Ascending aorta (tissue), 2 donors: ENCODE measurements at regions of chr3 and their contacts with region 1.

Region 1: GRCh38 chr3:124559881-124560574 is 170.2 kb upstream of the UMPS start:
- DNase-seq: peak in 1 of 2 donors; percentile 81
- H3K4me3 ChIP-seq: no peak overlapping the region
- H3K27ac ChIP-seq: peak overlapping the region in 1 of 2 donors; percentile 74
- H3K4me1 ChIP-seq: peaks cover 0 to 29% of the 10 kb centered on the region in 2 donors
- H3K27me3 ChIP-seq: no peaks in the 10 kb centered on the region
- CTCF ChIP-seq: peak; percentile 64 to 81 (median 81)

Region 2: GRCh38 chr3:124351430-124352148 is 208.4 kb before region 1 on chr3:
- intact Hi-C with region 1: loop called (anchors 10 kb)
- DNase-seq: no peak
- H3K4me3 ChIP-seq: no peak overlapping the region
- H3K27ac ChIP-seq: peak overlapping the region in 1 of 2 donors; percentile 51
- H3K4me1 ChIP-seq: peaks cover 0 to 6% of the 10 kb centered on the region in 2 donors
- H3K27me3 ChIP-seq: no peaks in the 10 kb centered on the region
- CTCF ChIP-seq: peak; percentile 38 to 50 (median 45)

Region 3: DNA sequence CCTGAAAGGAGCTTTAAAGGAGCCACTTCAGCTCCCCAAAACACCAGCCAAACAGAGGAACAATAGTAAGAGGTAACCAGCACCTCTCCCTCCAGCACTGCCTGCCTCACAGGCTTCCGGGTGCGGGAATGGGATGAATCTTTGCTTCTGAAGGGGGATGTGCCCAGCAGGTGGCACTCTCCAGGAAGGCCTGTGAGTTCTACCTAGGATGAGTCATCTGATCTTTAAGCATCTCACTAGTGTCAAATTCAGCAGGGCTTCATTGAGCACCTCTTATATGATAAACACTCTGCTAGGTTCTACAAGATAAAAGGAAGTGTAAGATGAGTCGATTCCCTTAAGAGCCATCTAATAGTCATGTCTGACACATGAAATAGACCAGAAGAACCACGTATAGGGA is 67.2 kb before region 1 on chr3:
- intact Hi-C with region 1: loop called (anchors 2 kb)
- DNase-seq: no peak
- H3K4me3 ChIP-seq: no peak overlapping the region
- H3K27ac ChIP-seq: no peak overlapping the region
- H3K4me1 ChIP-seq: peaks cover 0 to 2% of the 10 kb centered on the region in 2 donors
- H3K27me3 ChIP-seq: no peaks in the 10 kb centered on the region
- CTCF ChIP-seq: peak in 2 of 3 experiments; percentile 14 to 33

Region 4: GRCh38 chr3:124688581-124689454 is 128.8 kb after region 1 on chr3:
- intact Hi-C with region 1: loop called (anchors 2 kb)
- DNase-seq: peak in 1 of 2 donors; percentile 86
- H3K4me3 ChIP-seq: no peak overlapping the region
- H3K27ac ChIP-seq: no peak overlapping the region
- H3K4me1 ChIP-seq: no peaks in the 10 kb centered on the region
- H3K27me3 ChIP-seq: no peaks in the 10 kb centered on the region
- CTCF ChIP-seq: peak; percentile 77 to 87 (median 78)

Region 5: GRCh38 chr3:124905849-124906248 is 345.8 kb after region 1 on chr3:
- intact Hi-C with region 1: loop called (anchors 10 kb)
- DNase-seq: no peak
- H3K4me3 ChIP-seq: no peak overlapping the region
- H3K27ac ChIP-seq: no peak overlapping the region
- H3K4me1 ChIP-seq: peaks cover 0 to 5% of the 10 kb centered on the region in 2 donors
- H3K27me3 ChIP-seq: no peaks in the 10 kb centered on the region
- CTCF ChIP-seq: no peak